GM13976 (cell line): ENCODE measurements at regions of chr10 and their contacts with region 1.

Region 1: GRCh38 chr10:59625721-59626522 is 83.7 kb downstream of the SLC16A9 start:
- DNase-seq: peak; percentile 71
- CTCF ChIP-seq: peak; percentile 58

Region 2: DNA sequence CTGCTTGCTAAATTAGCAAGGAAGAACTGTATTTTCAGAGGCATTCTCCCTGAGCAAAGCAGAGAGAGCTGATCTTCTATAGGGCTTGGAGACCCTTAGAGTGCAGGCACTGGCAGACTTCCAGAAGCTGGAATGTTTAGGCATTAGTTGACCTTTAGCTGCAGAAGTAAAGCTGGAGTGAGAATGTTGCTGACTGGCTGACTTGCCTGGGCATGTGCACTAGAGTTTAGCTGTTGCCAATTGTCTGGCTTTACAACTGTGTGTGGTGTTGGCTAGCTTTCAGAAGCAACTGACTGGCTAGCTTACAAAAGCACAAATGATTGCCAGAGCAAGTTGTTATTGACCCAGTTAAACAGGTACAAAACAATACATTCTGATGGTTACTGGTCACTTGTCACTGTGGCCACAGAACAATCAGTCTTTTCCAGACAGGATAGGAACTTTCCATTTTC is 288.7 kb before region 1 on chr10:
- in situ Hi-C with region 1: no loop called
- DNase-seq: no peak
- CTCF ChIP-seq: no peak

Region 3: DNA sequence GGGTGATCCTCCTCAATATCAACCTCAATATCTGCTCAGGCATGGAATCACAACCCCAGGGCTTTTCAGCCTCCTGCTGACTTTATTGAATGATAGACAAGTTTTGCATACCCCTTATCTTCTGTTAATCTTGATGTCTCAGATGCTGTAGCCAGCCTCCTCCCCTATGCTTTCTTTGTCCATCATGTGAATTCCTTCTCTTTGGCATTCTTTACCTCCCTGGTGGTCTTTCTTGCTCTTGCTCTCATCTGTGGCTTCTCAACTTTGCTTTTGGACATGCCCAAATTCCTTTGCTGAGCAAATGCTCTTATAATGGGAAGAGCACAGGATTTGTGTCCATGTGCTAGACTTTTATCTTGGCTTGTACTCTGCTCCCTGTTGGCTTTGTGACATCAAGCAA is 190.2 kb before region 1 on chr10:
- in situ Hi-C with region 1: no loop called
- DNase-seq: no peak
- CTCF ChIP-seq: no peak

Region 4: GRCh38 chr10:59448616-59449015 is 177.3 kb before region 1 on chr10:
- in situ Hi-C with region 1: no loop called
- DNase-seq: no peak
- CTCF ChIP-seq: no peak

Region 5: DNA sequence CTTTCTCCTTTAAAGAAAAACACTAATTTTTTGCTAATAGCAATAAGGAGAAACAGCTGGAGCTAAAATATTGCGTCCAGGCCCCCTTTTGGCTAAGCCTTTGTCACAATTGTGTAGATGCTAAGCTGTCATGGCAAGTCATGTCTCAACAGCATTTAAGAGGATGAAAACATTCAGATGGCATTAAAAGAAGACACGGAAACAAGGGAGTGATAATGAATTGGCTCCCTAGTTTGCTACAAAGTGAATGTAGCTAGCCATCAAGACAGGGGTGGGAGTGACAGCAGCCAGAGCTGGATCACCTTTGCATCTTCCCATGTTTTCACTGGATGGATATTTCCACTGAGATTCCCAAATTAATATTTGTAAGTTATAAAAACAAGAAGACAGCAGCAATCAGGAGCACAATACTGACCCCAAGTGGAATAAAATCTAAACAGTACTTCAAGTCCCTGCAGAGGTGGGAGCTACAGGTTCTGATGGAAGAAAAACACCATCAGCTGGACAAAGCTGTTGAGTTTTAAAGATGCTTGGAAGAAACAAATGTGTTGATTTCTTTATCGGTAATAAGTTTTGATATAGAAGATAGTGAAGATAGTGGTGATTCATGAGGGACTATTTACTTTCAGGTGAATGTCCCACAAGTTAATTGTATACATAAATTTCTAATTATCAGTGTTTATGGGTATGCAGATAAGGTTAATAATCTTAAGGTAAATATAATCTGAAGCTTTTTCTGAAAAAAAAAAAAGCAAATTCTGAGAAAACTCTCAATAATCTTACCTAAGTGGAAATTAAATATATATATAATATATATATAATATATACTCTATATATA is 45.7 kb before region 1 on chr10:
- in situ Hi-C with region 1: no loop called
- DNase-seq: no peak
- CTCF ChIP-seq: no peak

Region 6: DNA sequence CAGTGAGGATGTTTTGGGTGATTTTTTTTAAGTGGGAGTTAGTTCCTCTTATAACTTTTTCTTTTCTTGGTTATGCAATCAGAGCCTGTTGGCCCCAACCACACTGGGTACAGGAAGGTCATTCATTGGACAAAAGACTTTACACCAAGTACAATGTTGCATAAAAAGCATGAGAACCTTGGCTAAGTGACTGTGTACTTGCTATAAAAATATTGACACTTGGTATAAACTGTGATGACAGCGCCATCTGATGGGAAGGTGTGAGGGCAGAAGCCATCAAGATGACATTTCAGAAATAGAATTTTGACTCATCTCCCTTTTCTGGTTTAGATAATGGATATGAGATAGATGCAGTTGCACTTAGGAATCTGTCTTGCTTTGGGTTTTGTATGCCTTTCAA is 406.8 kb after region 1 on chr10:
- in situ Hi-C with region 1: loop called (anchors 10 kb)
- DNase-seq: peak; percentile 63
- CTCF ChIP-seq: peak; percentile 54

Region 7: GRCh38 chr10:60208676-60209269 is 582.9 kb after region 1 on chr10:
- in situ Hi-C with region 1: loop called (anchors 25 kb)
- DNase-seq: no peak
- CTCF ChIP-seq: peak; percentile 51